GM10248 (cell line): ENCODE measurements at regions of chr12 and their contacts with region 1.

Region 1: DNA sequence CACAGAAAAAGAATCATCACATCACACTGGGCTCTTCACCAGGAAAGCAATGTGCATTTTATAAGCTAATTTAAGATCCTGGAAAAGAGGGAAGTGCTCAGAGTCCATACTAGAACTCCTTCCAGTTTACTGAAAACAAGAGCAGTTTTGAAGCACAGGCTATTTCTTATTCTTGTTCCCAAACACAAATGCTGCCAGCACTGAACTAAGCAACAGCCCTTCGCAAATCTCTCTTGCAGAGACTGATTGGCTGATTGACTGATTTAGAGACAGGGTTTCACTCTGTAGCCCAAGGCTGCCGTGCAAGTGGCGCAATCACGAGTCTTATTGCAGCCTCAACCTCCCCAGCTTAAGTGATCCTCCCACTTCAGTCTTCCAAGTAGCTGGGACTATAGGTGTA is 44.8 kb downstream of the BCL2L14 start:
- DNase-seq: no peak
- CTCF ChIP-seq: no peak

Region 2: DNA sequence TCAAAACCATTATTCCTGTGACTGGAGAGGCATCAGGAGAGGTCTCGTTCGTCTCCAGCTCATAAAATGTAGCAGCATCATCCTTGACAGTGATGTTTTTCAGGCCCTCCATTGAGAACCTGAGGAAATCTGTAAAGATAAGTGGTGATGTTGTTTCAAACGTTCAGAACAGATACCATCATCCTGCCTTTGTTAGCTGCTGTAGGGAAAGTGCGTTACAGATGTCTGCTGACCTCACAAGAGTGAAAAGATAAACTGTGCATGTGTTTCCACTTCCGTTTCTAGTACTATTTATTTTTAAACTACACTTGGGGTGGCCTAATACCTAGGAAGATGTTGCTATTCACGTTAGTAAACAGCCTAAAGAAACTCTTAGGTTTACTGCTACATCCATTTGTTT is 16.4 kb before region 1 on chr12:
- CTCF ChIA-PET with region 1: interaction called, 14 read pairs
- POLR2A ChIA-PET with region 1: no interaction called
- DNase-seq: no peak
- CTCF ChIP-seq: no peak